ENCODE measurements at regions of chr13 and their contacts with region 1.

Region 1: DNA sequence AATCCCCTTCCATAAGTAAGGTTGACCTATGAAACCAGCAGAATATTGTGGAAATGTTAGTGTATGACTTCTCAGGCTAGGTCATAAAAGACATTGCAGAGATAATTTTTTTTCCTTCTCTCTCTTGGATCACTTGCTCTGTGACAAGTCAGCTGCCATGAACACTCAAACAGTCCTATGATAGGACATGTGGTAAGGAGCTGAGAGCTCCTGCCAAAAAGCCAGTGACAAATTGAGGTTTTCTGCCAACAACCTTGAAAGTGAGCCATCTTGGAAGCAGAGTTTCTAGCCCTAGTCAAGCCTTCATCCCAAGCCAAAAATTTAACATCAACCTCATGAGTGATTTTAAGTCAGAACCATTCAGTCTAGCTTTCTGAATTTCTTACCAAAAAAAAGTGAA is 270.9 kb upstream of the NBEA start:
- DNase-seq: no peak

Region 2: GRCh38 chr13:34340538-34340937 is 330.6 kb before region 1 on chr13:
- intact Hi-C with region 1: no loop called
- DNase-seq: no peak

Region 3: DNA sequence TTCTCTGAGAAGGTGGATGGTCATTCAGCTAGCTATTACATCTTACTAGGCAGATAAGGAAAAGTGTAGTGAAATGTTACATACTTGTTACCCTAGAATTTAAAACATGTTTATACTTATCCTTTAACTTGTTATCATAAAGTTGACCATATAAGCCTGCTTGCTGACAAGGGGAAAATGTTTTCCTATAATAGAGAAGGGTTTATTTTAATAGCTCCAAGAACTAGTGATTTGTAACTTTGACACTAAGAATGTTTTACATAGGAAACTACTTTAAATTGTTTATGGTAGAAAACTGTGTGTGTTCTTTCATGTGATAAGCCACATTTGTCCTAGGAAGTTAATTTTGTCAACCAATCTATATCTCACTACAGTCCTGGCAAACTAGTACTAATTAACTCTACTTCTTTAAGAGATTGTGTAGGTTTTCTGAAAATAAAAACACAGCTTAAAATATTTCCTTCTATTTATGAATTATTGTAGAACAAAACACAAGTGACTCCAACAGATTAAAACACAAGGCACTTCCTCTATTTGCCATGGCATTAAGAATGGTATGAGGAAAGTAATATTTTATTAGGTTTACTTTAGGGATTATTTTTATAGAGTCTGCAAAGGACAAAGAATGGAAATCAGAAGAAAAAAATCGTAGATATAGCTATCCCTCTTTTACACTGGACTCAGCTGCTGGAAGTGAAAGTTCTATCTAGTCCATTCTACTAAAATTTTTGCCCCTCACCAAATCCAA is 37.6 kb after region 1 on chr13:
- intact Hi-C with region 1: no loop called
- DNase-seq: no peak

Region 4: DNA sequence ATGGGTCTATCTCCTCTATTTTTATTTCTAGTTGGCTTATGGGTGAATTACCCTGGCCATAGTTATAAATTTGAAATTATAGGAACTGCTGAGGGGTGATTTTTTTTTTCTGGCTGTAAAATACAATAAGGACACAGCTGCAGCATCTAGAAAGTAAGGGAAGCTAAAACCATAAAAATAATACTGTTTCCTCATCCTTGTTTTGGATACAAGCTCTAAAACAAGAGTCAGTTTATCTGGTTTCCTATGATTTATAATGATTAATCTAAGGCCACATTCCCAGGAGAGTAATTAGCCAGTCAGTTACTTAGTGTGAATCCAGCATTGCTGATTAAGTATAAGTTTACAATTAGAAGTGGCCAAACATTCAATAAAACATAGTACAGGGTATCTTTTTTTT is 51.8 kb after region 1 on chr13:
- intact Hi-C with region 1: no loop called
- DNase-seq: no peak

Region 5: DNA sequence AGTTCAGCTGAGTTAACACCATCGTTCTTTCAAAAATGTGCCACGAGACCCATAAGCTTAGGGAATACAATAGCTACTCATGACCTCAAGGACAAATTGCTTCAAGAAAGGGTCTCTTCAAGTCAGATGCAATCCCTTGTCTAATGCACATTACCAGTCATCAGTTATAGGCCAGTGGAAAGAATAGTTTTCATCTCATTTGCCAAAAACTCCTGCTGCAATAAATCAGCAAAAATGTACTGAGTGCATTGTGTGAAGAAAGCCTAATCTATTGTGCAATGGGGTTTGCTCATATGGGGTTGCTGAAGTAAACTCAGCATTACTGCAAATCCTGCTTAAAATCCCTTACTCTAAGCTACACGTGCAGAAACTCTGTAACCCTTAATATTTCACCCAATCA is 62.6 kb after region 1 on chr13:
- intact Hi-C with region 1: loop called (anchors 5 kb)
- DNase-seq: no peak

Region 6: DNA sequence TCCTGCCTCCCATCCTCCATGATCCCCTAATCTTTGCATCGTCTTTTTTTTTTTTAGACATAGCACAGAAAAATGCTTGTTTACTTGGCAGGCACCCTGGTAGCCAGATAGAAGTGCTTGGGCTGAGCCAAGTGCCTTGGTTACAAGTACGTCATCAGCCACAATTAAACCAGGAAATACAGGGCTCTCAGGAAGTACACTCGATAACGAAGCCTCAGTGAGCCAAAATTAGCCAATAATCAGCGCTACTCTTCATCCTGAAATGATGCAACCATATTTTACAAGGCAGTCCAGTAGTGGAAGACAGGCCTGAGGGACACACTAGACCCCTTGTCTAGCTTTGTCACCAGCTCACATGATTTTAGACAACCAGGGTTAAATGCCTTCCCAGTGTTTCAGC is 76.9 kb after region 1 on chr13:
- intact Hi-C with region 1: loop called (anchors 2 kb)
- DNase-seq: no peak

Region 7: GRCh38 chr13:34883396-34883795 is 212.3 kb after region 1 on chr13:
- intact Hi-C with region 1: no loop called
- DNase-seq: no peak